Activated CD4-positive, alpha-beta T cell treated with anti-CD3 and anti-CD28 coated beads for 36 hours (primary cell): ENCODE measurements at regions of chr19 and their contacts with region 1.

Region 1: DNA sequence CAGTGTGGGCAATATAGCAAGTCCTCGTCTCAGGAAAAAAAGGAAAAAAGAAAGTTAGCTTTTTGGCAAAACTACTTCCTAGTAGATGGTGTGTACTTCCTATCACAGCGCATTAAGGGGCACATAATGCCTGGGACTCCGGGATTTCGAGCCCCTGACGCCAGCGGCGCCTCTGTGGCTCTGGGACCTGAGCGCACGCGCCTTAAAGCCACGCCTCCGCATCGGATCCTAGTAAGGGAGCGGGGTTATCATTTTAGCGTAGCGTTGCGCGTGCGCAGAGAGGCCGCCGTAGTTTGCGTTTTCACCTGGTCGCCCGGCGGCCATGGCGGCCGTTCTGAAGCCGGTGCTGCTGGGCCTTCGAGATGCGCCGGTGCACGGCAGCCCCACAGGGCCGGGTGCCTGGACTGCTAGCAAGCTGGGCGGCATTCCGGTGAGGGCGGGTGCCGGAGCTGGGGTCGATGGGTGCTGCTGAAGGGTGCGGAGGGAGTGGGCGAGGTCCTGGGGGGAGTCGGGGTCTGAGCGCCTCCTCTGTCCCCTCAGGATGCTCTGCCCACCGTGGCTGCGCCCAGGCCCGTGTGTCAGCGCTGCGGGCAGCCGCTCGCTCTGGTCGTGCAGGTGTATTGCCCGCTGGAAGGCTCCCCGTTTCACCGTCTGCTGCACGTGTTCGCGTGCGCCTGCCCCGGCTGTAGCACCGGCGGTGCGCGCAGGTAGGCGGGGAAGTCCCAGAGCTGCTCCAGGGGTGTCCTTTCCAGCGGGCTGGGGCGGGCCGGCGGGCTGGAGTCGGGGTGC is at the start of gene PDCD2L:
- DNase-seq: peak; percentile 97
- ATAC-seq: peak; percentile 95
- H3K4me3 Mint-ChIP-seq: peak within 1 kb of the TSS; percentile 83
- H3K27ac Mint-ChIP-seq: peak within 1 kb of the TSS; percentile 80
- H3K4me1 Mint-ChIP-seq: peaks cover 23% of the 10 kb centered on the region
- H3K27me3 Mint-ChIP-seq: no peaks in the 10 kb centered on the region
- total RNA-seq, gene PDCD2L: 31.0 to 35.2 TPM

Region 2: DNA sequence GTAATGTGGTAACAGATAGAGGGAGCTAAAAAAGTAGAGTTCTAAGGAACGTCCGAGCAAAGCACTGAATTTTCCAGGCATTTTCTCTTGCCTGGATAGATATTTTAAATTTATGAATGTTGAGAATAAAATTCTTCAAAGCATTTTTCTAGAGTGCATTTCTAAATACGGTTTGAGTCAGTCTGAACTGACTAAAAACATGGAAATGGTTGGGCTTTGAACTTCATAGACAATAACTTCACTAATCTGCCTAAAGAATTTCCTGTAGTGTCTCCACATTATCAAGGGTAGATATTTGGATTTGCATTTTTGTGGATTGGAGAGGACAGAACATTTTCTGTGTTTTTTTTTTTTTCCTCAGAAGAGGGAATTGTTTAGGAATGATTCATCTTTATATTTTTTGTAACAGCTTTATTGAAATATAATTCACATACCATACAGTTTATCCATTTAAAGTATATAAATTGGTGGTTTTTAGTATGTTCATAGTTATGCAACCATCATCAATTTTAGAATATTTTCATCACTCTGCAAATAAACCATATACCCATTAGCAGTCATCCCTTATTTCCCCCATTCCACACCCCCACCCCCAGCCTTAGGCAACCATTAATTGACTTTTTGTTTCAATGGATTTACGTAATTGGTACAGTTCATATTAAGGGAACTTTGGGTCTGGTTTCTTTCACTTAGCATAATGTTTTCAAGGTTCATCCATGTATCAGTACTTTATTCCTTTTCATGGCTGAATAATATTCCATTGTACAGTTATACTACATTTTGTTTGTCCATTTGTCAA is 129.3 kb before region 1 on chr19:
- CTCF ChIA-PET with region 1: no interaction called
- POLR2A ChIA-PET with region 1: no interaction called
- intact Hi-C with region 1: no loop called
- DNase-seq: no peak
- ATAC-seq: no peak
- H3K4me3 Mint-ChIP-seq: no peak overlapping the region
- H3K27ac Mint-ChIP-seq: peak overlapping the region; percentile 11
- H3K4me1 Mint-ChIP-seq: peaks cover 74% of the 10 kb centered on the region
- H3K27me3 Mint-ChIP-seq: no peaks in the 10 kb centered on the region

Region 3: DNA sequence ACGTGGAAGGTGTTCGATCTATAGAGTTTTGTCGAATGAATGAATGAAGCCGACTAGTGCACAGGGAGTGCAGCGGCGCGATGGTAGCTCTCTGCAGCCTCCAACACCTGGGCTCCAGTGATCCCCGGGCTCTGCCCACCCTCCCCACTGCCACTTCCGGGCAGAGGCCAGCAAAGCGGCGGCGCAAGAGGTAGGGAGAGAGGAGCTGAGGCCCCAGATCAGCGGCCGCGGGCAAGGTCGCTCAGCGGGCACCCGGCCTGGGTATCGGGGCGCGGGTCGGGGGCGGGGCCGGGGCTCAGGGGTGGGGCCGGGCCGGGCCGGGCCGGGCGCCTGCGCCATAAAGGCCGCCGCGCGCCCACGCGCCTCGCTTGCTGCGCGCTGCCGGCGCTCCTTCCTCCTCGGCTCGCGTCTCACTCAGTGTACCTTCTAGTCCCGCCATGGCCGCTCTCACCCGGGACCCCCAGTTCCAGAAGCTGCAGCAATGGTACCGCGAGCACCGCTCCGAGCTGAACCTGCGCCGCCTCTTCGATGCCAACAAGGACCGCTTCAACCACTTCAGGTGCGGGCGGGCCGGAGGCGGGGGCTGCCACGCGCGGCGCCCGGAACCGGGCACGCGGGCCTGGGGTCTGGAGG is 39.4 kb before region 1 on chr19 and contains the start of gene GPI:
- CTCF ChIA-PET with region 1: no interaction called
- POLR2A ChIA-PET with region 1: interaction called, 3 read pairs
- intact Hi-C with region 1: loop called in 1 of 2 experiments (anchors 1 kb)
- DNase-seq: peak; percentile 86
- ATAC-seq: peak; percentile 87
- H3K4me3 Mint-ChIP-seq: peak within 1 kb of the TSS; percentile 91
- H3K27ac Mint-ChIP-seq: peak within 1 kb of the TSS; percentile 90
- H3K4me1 Mint-ChIP-seq: peaks cover 52% of the 10 kb centered on the region
- H3K27me3 Mint-ChIP-seq: no peaks in the 10 kb centered on the region
- total RNA-seq, gene GPI: 686 to 839 TPM

Region 4: DNA sequence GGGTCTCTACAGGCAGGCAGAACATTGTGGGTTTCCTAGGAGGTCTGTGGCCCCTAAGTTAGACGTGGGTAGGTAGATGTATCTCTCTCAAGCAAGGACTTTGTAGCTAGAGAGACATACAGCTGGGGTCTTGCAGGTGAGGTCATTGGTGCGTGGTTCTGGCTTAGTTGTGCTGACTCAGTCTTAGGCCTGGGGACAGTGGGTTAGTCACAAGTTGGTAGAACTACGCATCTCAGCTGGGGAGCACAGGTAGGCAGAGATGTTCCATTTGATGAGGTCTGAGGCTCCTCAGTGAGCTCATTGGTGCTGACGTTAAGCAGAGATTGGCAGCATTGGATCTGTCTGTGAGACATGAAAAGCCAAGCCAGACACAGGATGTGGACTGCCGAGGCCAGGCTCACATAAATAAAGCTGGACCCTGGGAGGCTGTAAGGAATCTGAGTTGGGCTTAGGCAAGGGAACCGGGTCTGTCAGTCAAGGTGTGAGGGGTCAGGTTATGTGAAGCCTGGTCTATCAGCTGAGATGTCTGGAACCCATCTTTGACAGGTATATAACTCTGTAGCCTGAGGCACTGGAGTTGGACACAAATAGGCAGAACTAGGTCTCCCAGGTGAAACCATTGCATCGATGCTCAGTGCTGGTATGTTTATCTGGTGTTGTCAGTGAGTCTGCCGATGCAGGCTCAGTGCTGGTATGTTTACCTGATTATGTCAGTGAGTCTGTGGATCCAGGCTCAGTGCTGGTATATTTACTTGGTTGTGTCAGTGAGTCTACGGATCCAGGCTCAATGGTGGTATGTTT is 17.5 kb before region 1 on chr19:
- CTCF ChIA-PET with region 1: no interaction called
- POLR2A ChIA-PET with region 1: no interaction called
- intact Hi-C with region 1: no loop called
- DNase-seq: no peak
- ATAC-seq: no peak
- H3K4me3 Mint-ChIP-seq: no peak overlapping the region
- H3K27ac Mint-ChIP-seq: no peak overlapping the region
- H3K4me1 Mint-ChIP-seq: no peaks in the 10 kb centered on the region
- H3K27me3 Mint-ChIP-seq: no peaks in the 10 kb centered on the region

Region 5: DNA sequence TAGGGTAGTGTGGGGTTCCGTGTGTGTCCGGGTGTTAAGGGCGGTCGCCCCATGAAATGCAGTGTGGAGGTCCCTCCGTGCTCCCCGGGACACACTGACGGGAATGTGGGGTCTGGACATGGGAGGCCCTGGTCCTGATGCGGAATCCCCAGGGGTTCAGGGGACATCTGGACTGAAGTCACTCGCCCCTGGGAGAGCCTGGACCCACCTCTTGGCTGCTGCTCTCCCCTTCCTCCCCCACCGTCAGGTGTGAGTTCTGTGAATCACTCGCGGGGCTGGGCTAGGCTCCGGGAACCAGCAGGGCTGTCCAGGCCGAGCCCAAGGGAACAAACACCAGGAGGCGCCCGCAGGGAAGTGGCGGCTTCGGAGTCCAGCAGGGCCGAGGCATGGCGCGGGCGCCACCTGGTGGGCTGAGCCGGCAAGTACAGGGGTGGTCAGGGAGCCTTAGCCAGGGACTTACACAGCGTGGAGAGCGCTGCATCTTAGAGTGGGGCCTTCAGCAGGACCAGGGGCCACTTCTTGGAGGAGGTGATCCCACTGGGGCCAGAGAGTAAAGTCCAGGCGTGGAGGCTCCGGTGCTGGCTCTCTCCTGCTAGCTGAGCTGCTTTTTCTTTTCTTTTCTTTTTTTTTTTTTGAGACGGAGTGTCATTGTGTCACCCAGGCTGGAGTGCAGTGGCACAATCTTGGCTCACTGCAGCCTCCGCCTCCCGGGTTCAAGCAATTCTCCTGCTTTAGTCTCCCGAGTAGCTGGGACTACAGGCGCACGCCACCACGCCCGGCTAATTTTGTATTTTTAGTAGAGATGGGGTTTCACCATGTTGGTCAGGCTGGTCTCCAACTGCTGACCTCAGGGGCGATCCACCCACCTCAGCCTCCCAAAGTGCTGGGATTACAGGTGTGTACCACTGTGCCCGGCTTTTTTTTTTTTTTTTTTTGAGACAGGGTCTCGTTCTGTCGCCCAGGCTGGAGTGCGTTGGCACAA is 97.3 kb after region 1 on chr19:
- CTCF ChIA-PET with region 1: no interaction called
- POLR2A ChIA-PET with region 1: no interaction called
- intact Hi-C with region 1: loop called in 1 of 2 experiments (anchors 1 kb)
- DNase-seq: peak; percentile 94
- ATAC-seq: peak; percentile 95
- H3K4me3 Mint-ChIP-seq: no peak overlapping the region
- H3K27ac Mint-ChIP-seq: no peak overlapping the region
- H3K4me1 Mint-ChIP-seq: peaks cover 6% of the 10 kb centered on the region
- H3K27me3 Mint-ChIP-seq: peaks cover 10% of the 10 kb centered on the region